Calu3 (cell line): ENCODE measurements at regions of chr15 and their contacts with region 1.

Region 1: GRCh38 chr15:101258238-101259144 is 6.6 kb upstream of the CHSY1 start:
- DNase-seq: peak; percentile 75
- H3K4me3 Mint-ChIP-seq: no peak overlapping the region
- H3K27ac Mint-ChIP-seq: no peak overlapping the region
- H3K4me1 Mint-ChIP-seq: no peaks in the 10 kb centered on the region
- H3K27me3 Mint-ChIP-seq: peaks cover 43% of the 10 kb centered on the region
- CTCF ChIP-seq: peak; percentile 63

Region 2: DNA sequence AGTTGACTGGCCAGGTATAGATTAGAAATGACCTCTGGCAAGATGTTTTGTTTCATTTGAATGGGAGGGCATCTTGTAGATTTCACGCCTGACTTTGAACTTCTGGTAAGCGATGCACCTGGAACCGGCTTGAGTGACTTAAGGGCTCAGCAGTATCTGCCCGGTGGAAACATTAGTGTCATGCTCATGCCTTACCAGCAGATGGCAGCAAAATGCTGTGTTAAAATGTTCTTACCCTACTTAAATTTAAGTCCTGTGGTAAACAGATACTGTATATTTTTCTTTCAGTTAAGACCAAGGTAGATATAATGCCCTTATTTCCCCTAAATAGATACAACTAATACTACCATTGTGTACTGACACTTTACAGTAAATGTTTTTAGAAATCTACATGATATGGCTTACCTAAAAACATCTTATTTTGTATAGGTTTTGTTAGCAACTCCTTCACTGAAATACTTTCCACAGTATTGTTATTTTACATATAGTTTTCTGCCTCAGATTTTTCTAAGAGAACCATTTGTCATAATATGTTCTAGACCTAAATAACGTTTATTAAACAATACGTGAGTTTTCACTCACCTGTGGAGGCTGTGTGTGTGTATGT is 630.6 kb before region 1 on chr15:
- CTCF ChIA-PET with region 1: no interaction called
- intact Hi-C with region 1: loop called (anchors 5 kb)
- DNase-seq: peak; percentile 76
- H3K4me3 Mint-ChIP-seq: no peak overlapping the region
- H3K27ac Mint-ChIP-seq: no peak overlapping the region
- H3K4me1 Mint-ChIP-seq: peaks cover 14% of the 10 kb centered on the region
- H3K27me3 Mint-ChIP-seq: no peaks in the 10 kb centered on the region
- CTCF ChIP-seq: peak; percentile 61

Region 3: DNA sequence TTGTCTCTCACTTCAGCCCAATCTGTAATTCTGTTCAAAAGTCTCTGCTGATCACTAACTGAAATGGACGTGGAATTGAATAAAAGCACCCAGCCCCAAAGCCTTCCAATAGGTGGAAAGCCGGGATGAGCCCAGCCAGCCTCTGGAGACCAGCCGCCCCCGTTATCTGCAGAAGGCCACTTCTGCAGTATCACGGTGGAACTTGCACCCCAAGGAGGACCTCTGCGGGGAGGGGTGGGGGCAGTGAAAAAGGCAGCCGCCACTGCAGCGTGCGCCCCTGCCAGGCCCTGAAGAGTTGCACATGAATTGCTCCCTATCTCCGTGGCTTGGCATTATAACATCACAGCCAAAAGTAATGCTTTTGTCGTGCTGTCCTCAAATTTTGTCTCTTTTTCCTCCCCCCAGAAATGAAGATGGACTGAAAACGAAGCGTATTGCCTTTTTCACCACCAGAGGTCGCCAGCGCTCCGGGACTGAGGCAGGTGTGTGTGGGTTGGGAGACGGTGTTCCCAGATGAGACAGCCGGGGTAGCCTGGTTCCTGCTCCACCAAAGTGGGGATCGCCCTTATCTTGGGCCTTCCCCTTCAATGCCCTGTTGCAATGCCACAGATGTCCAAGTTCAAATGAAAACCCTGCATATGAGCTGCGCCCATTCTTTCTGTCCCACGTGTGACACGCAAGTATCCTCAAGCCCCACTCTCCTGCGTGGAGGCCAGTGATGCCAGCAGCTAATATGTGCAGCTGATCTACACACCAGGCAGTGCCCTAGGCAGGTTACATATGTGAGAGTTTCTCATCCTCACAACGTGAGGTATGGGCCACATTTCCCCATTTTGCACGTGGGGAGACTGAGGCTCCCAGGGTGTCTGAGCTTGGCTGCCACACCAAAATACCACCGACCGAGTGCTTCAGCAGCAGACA is 243.3 kb before region 1 on chr15:
- CTCF ChIA-PET with region 1: interaction called, 14 read pairs
- intact Hi-C with region 1: loop called (anchors 1 kb)
- DNase-seq: peak; percentile 86
- H3K4me3 Mint-ChIP-seq: no peak overlapping the region
- H3K27ac Mint-ChIP-seq: no peak overlapping the region
- H3K4me1 Mint-ChIP-seq: no peaks in the 10 kb centered on the region
- H3K27me3 Mint-ChIP-seq: no peaks in the 10 kb centered on the region
- CTCF ChIP-seq: peak; percentile 84

Region 4: DNA sequence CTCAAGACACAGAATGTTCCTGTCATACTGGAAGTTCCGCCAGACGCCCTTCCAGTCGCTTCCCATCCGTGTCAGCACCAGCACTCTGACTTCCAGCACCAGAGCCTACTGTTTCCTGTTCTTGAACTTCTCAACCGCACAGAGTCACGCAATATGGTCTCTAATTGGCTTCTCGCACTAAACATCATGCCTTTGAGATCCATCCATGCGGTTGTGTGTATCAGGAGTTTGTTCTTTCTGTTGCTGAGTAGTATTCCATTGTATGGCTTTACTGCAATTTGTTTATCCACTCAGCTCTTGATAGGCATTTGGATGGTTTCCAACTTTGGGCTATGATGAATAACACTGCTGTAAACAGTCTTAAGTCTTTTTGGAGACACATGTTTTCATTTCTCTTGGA is 227.3 kb before region 1 on chr15:
- CTCF ChIA-PET with region 1: no interaction called
- intact Hi-C with region 1: loop called (anchors 5 kb)
- DNase-seq: no peak
- H3K4me3 Mint-ChIP-seq: no peak overlapping the region
- H3K27ac Mint-ChIP-seq: no peak overlapping the region
- H3K4me1 Mint-ChIP-seq: no peaks in the 10 kb centered on the region
- H3K27me3 Mint-ChIP-seq: no peaks in the 10 kb centered on the region
- CTCF ChIP-seq: no peak

Region 5: DNA sequence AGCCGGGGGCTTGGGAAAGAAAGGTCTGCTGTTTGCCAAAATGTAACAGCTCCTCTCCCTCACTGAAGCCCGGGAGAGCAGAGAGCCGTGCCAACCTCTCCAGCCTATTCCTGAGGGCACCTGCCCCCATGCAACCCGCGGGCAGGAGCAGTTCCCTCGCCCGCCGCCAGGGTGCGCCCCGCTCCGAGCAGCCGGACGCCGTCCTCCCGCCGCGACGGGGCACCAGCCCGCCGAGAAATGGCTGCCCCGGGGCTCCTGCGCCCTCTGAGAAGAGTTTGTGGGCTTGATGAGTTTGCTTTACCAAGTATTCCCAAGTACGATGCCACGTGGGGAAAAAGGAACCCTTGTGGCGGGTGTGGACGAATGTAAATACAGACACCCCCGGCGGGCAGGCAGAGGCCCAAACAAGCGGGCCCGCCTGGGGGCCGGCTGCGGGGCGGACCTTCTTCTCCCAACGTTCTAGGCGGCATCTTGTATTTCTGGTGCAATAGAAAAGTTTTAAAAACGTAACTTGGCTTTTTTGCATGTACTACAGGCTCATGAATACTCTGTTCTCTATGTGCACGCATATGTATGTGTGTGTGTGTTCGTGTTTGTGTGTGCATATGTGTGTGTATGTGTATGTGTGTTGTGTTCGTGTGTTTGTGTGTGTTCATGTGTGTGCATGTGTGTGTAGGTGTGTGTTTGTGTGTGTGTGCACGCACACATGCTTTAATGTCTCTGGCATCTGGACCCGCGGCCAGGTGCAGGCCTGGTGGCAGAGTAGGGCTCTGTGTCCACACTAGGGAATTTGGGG is 169.5 kb before region 1 on chr15:
- CTCF ChIA-PET with region 1: no interaction called
- intact Hi-C with region 1: loop called (anchors 1 kb)
- DNase-seq: peak; percentile 94
- H3K4me3 Mint-ChIP-seq: peak overlapping the region; percentile 36
- H3K27ac Mint-ChIP-seq: no peak overlapping the region
- H3K4me1 Mint-ChIP-seq: no peaks in the 10 kb centered on the region
- H3K27me3 Mint-ChIP-seq: peaks cover 20% of the 10 kb centered on the region
- CTCF ChIP-seq: peak; percentile 99